ENCODE measurements at regions of chr3 and their contacts with region 1.

Region 1: GRCh38 chr3:154252759-154253638 is 71.3 kb downstream of the DHX36 start:
- DNase-seq: peak; percentile 94
- ATAC-seq: peak; percentile 96

Region 2: GRCh38 chr3:153026026-153026425 is 1227.0 kb before region 1 on chr3:
- intact Hi-C with region 1: loop called (anchors 10 kb)
- DNase-seq: no peak
- ATAC-seq: no peak

Region 3: DNA sequence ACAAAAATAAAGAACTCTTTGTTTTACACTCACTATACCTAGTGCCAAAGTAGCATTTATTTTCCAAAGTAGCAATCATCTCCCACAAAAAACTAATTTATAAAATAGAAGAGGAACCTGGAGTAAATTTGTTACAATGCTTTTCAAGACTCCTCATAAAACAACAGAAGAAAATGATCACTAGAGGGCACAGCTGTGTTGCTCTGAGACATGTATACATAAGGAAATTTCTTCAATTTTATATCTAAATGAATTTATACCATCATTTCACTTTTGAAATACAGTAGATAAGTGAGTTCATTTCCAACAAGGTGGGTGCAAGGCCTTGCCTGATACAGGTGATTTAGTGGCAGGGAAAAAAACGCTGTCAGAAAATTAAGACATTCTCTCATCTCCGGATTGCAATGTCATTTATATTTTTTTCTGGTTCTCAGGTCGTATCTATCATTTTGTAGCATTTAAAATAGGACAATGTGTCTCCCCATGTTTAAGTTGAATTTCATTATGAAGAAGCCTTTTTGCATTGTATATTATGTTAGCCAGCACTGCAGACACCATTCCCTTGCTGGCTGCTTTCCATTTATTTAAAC is 157.1 kb before region 1 on chr3:
- intact Hi-C with region 1: loop called (anchors 2 kb)
- DNase-seq: no peak
- ATAC-seq: no peak

Region 4: DNA sequence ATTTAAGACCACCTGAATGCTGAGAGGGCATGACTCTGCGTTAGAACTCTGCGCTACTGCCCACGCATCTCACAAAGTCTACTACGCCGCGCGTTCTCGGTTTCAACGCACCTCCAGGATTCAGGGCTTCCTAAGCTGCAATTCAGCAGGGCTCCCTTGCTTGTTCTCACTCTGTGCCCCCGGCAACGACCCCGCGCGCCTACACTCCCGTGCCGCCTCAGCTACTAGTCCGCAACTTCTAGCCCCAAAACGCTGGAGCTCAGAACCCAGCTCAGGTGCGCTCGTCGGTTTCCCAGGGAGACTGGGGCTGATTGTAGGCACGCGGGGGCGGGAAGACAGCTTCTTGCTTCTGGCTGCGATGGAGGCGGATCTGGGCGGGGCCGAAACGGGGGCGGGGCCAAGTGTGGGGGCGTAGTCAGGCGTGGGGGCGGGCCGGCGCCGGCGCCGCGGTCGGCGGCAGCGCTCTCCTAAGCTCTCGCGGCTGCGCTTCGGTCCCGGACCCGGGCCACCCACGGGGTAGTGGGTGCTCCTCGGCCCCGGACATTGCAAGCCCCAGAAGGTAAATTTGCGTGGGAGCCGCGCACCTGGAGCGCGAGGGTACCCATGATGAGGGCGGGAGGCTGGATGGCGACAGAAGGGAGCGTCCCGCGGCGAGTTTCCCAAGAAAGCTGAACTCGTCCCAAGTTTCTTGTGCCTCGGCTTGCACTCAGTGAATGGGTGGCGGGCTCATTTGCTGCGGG is 131.9 kb before region 1 on chr3 and contains the start of gene ARHGEF26:
- intact Hi-C with region 1: loop called (anchors 10 kb)
- DNase-seq: peak; percentile 87
- ATAC-seq: peak; percentile 97
- total RNA-seq, gene ARHGEF26: 1.4 TPM

Region 5: DNA sequence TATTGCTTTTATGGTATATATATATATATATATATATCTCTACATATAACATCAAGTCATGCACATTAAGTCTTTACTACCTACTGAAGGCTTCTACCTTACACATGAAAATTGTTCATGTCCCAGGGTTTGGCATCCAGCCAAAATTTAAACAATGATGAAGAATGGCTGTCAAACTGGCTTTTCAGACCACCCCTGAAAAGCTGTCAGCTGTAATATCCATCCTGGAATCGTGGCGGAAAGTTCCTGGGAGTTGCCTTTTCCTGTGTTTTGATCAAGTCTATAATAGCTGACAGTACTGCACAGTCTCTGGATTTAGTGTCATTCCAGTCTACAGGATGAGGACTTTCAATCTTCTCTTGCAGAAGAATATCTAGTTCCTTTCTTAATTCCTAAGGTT is 23.0 kb after region 1 on chr3:
- intact Hi-C with region 1: loop called (anchors 2 kb)
- DNase-seq: no peak
- ATAC-seq: peak; percentile 69